GM12878 (cell line): ENCODE measurements at regions of chr1 and their contacts with region 1.

Region 1: GRCh38 chr1:40185951-40186864 is 25.0 kb downstream of the RLF start:
- DNase-seq: peak; percentile 82
- ATAC-seq: peak; percentile 99
- H3K4me3 ChIP-seq: peak overlapping the region; percentile 60
- H3K27ac ChIP-seq: peak overlapping the region; percentile 71
- H3K4me1 ChIP-seq: peaks cover 32% of the 10 kb centered on the region
- H3K27me3 ChIP-seq: no peaks in the 10 kb centered on the region
- CTCF ChIP-seq: no peak
- EP300 ChIP-seq: peak; percentile 94
- POLR2A ChIP-seq: peak; percentile 57
- RAD21 ChIP-seq: no peak

Region 2: GRCh38 chr1:40161125-40161887 is 24.9 kb before region 1 on chr1 and contains the start of gene RLF:
- CTCF ChIA-PET with region 1: interaction called, 90 read pairs
- POLR2A ChIA-PET with region 1: interaction called, 6 read pairs
- RAD21 ChIA-PET with region 1: interaction called, 5 read pairs
- SMC1A ChIA-PET with region 1: interaction called, 66 read pairs
- in situ Hi-C with region 1: no loop called
- intact Hi-C with region 1: loop called (anchors 2 kb)
- DNase-seq: peak; percentile 67
- ATAC-seq: peak; percentile 92
- H3K4me3 ChIP-seq: peak within 1 kb of the TSS; percentile 97
- H3K27ac ChIP-seq: peak within 1 kb of the TSS; percentile 93
- H3K4me1 ChIP-seq: no peaks in the 10 kb centered on the region
- H3K27me3 ChIP-seq: no peaks in the 10 kb centered on the region
- CTCF ChIP-seq: no peak
- EP300 ChIP-seq: no peak; a peak in 1 of 4 replicates
- POLR2A ChIP-seq: peak; percentile 99
- RAD21 ChIP-seq: no peak
- polyA plus RNA-seq, gene RLF: 2.0 to 3.6 TPM

Region 3: GRCh38 chr1:40171036-40171435 is 15.2 kb before region 1 on chr1:
- CTCF ChIA-PET with region 1: interaction called, 29 read pairs
- POLR2A ChIA-PET with region 1: interaction called, 5 read pairs
- RAD21 ChIA-PET with region 1: interaction called, 4 read pairs
- SMC1A ChIA-PET with region 1: interaction called, 66 read pairs
- in situ Hi-C with region 1: no loop called
- intact Hi-C with region 1: no loop called
- DNase-seq: no peak
- ATAC-seq: no peak
- H3K4me3 ChIP-seq: no peak overlapping the region
- H3K27ac ChIP-seq: no peak overlapping the region
- H3K4me1 ChIP-seq: no peaks in the 10 kb centered on the region
- H3K27me3 ChIP-seq: no peaks in the 10 kb centered on the region
- CTCF ChIP-seq: no peak
- EP300 ChIP-seq: no peak
- POLR2A ChIP-seq: no peak
- RAD21 ChIP-seq: no peak

Region 4: GRCh38 chr1:40232444-40232843 is 46.2 kb after region 1 on chr1:
- CTCF ChIA-PET with region 1: interaction called, 3 read pairs
- POLR2A ChIA-PET with region 1: interaction called, 4 read pairs
- RAD21 ChIA-PET with region 1: interaction called, 7 read pairs
- SMC1A ChIA-PET with region 1: interaction called, 5 read pairs
- in situ Hi-C with region 1: no loop called
- intact Hi-C with region 1: loop called (anchors 5 kb)
- DNase-seq: peak; percentile 94
- ATAC-seq: peak; percentile 99
- H3K4me3 ChIP-seq: no peak overlapping the region
- H3K27ac ChIP-seq: peak overlapping the region; percentile 36
- H3K4me1 ChIP-seq: peaks cover 32% of the 10 kb centered on the region
- H3K27me3 ChIP-seq: no peaks in the 10 kb centered on the region
- CTCF ChIP-seq: no peak
- EP300 ChIP-seq: peak in 1 of 2 experiments; percentile 34; a peak in 1 of 4 replicates
- POLR2A ChIP-seq: no peak
- RAD21 ChIP-seq: no peak

Region 5: DNA sequence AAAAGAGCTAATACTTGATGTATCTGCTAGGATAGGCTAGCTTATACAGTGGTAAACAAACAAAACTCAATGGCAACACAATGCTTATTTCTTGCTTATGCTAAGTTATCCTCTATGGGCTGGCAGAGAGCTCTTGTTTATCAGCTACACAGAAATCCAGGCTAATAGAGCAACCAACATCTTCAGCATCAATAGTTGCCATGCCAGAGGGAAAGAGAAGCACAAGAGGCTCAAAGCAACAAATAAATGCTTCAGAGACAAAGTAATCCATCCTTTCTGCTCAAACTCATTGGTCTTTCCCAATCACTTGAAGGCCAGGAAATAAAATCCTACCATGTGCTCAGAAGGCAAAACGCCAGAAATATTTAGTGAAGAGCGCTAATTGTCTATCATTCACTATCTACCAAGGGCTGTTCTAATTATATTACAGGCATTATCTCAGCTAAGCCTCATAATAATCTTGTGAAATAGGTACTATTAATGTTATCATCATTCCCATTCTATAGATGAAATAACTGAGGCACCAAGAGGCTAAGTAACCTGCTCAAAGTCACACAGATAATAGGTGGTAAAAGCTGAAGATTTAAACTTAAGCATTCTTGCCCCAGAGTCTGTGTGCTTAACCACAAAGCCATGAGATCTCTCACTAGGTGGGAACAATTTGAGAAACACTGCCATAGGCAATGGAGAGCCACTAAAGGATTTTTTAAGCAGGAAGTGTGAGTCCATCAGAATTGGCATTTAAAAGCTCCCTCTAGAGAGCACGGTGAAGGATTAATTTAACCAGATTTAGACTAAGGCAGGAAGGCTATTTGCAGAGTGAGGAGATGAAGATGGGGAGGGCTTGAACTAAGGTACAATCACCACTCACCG is 185.4 kb after region 1 on chr1:
- CTCF ChIA-PET with region 1: no interaction called
- POLR2A ChIA-PET with region 1: no interaction called
- RAD21 ChIA-PET with region 1: no interaction called
- SMC1A ChIA-PET with region 1: no interaction called
- in situ Hi-C with region 1: no loop called
- intact Hi-C with region 1: no loop called
- DNase-seq: no peak
- ATAC-seq: no peak
- H3K4me3 ChIP-seq: no peak overlapping the region
- H3K27ac ChIP-seq: no peak overlapping the region
- H3K4me1 ChIP-seq: no peaks in the 10 kb centered on the region
- H3K27me3 ChIP-seq: no peaks in the 10 kb centered on the region
- CTCF ChIP-seq: no peak
- EP300 ChIP-seq: no peak
- POLR2A ChIP-seq: no peak
- RAD21 ChIP-seq: no peak

Region 6: GRCh38 chr1:40774266-40774998 is 588.2 kb after region 1 on chr1:
- CTCF ChIA-PET with region 1: no interaction called
- POLR2A ChIA-PET with region 1: no interaction called
- RAD21 ChIA-PET with region 1: no interaction called
- SMC1A ChIA-PET with region 1: no interaction called
- in situ Hi-C with region 1: no loop called
- intact Hi-C with region 1: no loop called
- DNase-seq: no peak
- ATAC-seq: peak; percentile 88
- H3K4me3 ChIP-seq: no peak overlapping the region
- H3K27ac ChIP-seq: no peak overlapping the region
- H3K4me1 ChIP-seq: no peaks in the 10 kb centered on the region
- H3K27me3 ChIP-seq: no peaks in the 10 kb centered on the region
- CTCF ChIP-seq: peak; percentile 79 to 91 (median 86)
- EP300 ChIP-seq: no peak
- POLR2A ChIP-seq: no peak
- RAD21 ChIP-seq: peak; percentile 65